Posterior vena cava (tissue), 2 donors: ENCODE measurements at regions of chr10 and their contacts with region 1.

Region 1: GRCh38 chr10:115710172-115710571 is 562.8 kb downstream of the GFRA1 start:
- DNase-seq: no peak

Region 2: GRCh38 chr10:114850126-114850525 is 860.0 kb before region 1 on chr10:
- intact Hi-C with region 1: no loop called
- DNase-seq: no peak

Region 3: DNA sequence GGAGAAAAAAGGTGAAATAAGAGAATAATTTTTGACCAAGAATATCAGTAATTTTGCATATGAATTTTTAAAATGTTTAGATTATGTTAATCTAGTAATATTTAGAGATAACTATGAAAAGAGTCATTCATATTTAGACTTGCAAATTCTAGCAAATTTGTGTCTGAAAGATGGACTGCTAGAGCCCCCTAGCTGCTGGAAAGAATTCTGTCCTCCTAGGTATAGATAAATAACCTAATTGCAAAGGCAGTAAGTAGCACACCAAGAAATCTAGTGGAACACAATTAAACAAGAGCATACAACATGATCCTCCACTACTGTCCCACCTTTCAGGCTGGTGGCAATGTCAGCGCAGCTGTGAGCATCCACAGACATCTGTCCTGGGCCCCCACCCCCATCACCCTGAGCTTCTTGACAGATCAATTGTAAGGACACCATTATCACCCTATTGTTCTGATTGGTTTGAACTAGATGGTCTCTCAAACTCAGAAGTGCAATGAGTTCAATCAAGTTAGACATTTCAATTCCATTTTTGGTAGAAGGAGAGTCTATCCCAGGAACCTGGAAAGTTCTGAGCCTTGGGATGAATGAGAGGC is 577.8 kb after region 1 on chr10:
- intact Hi-C with region 1: loop called in 1 of 2 experiments (anchors 10 kb)
- DNase-seq: no peak